Activated naive CD4-positive, alpha-beta T cell treated with anti-CD3 and anti-CD28 coated beads for 36 hours (primary cell): ENCODE measurements at regions of chr3 and their contacts with region 1.

Region 1: DNA sequence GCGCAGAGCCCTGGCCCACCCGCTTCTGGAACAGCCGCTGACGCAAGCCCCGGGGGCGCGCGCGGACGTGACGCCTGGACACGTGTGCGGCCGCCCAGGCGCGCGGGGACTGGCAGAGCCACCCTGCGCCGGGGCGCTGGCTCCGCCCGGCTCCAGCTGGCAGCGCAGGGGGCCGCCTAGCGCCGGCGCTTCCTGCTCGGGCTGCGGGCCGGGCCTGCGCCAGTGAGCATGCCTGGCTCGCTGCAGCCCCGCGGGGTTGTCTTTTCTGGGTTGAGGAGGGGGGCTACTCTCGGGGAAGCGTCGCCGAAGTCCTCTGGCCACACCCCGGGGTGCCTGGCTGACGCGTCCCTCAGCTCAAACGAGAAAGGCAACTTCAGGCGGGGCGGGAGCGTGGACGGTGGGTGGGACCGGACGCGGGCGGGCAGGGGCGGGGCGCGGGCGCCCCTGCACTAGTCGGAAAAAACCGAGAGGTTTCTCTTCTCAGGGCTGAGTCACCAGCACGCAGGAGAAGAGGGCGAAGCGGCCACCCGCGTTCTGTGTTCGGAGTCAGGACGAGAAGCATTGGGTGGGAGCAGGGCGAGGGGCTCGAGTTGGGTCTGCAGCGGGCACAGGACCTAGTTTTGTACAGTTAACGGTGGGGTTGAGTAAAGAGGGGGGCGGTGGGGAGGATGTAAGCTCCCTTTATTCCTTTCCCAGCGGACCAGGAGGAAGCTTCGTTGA is at the start of gene SIAH2:
- DNase-seq: peak; percentile 94
- H3K4me3 Mint-ChIP-seq: peak within 1 kb of the TSS; percentile 99
- H3K27ac Mint-ChIP-seq: peak within 1 kb of the TSS; percentile 100
- H3K4me1 Mint-ChIP-seq: peaks cover 46% of the 10 kb centered on the region
- H3K27me3 Mint-ChIP-seq: no peaks in the 10 kb centered on the region
- total RNA-seq, gene SIAH2: 67.1 to 68.8 TPM

Region 2: GRCh38 chr3:150546226-150547044 is 216.8 kb before region 1 on chr3 and contains the starts of genes EIF2A and SERP1:
- CTCF ChIA-PET with region 1: interaction called, 3 read pairs
- intact Hi-C with region 1: loop called (anchors 1 kb)
- DNase-seq: peak; percentile 99
- H3K4me3 Mint-ChIP-seq: peak within 1 kb of the TSS; percentile 97
- H3K27ac Mint-ChIP-seq: peak within 1 kb of the TSS; percentile 95
- H3K4me1 Mint-ChIP-seq: peaks cover 69% of the 10 kb centered on the region
- H3K27me3 Mint-ChIP-seq: no peaks in the 10 kb centered on the region
- total RNA-seq, gene EIF2A: 133 to 135 TPM
- total RNA-seq, gene SERP1: 95.9 to 105 TPM

Region 3: DNA sequence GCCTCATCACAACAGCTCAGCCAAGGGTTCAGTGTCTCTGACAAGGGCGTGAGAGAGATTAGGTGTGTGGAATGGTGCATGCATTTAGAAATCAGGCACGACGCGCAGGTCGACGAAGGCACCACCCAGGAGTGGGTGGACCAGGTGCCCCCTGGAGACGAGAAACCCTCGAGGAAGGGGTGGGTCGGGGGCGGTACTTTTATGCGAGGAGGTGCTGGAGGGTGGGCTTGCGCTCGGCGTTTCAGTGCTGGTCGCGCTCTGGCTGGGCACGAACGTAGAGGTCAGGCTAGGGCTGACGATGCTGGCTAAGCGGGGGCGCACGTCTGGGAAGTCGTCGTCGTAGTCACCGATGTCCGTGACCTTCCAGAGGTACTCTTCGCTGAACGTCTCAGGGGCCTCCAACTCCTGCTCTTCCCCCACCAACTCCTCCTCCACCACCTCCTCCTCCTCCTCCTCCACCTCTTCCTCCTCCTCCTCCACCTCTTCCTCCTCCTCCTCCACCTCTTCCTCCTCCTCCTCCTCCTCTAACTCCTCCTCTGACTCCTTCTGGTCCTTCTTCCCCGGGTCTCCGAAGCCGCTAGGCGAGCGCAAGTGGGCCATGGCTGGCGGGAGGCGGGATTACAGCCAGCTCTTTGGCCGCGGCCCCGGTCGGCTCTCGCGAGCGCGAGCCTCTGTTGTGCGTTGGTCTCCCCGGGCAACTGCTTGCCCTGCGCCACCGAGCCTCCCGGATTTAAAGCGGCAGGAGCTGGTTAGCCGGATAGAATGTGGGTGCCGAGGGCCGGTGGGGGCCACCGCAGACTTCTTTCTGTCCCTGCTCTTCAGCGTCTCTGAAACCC is 59.8 kb before region 1 on chr3 and contains the start of gene ERICH6:
- CTCF ChIA-PET with region 1: interaction called, 3 read pairs
- intact Hi-C with region 1: loop called (anchors 1 kb)
- DNase-seq: peak; percentile 88
- H3K4me3 Mint-ChIP-seq: peak within 1 kb of the TSS; percentile 96
- H3K27ac Mint-ChIP-seq: no peak within 1 kb of the TSS
- H3K4me1 Mint-ChIP-seq: peaks cover 25% of the 10 kb centered on the region
- H3K27me3 Mint-ChIP-seq: no peaks in the 10 kb centered on the region
- total RNA-seq, gene ERICH6: not detected

Region 4: GRCh38 chr3:150751753-150752263 is 11.5 kb before region 1 on chr3:
- CTCF ChIA-PET with region 1: interaction called, 4 read pairs
- intact Hi-C with region 1: loop called (anchors 1 kb)
- DNase-seq: no peak
- H3K4me3 Mint-ChIP-seq: no peak overlapping the region
- H3K27ac Mint-ChIP-seq: peak overlapping the region; percentile 56
- H3K4me1 Mint-ChIP-seq: peaks cover 84% of the 10 kb centered on the region
- H3K27me3 Mint-ChIP-seq: no peaks in the 10 kb centered on the region

Region 5: GRCh38 chr3:150870396-150870795 is 107.1 kb after region 1 on chr3:
- CTCF ChIA-PET with region 1: interaction called, 3 read pairs
- intact Hi-C with region 1: loop called (anchors 1 kb)
- DNase-seq: no peak
- H3K4me3 Mint-ChIP-seq: no peak overlapping the region
- H3K27ac Mint-ChIP-seq: no peak overlapping the region
- H3K4me1 Mint-ChIP-seq: no peaks in the 10 kb centered on the region
- H3K27me3 Mint-ChIP-seq: peaks cover 6% of the 10 kb centered on the region

Region 6: GRCh38 chr3:151276687-151277042 is 513.4 kb after region 1 on chr3:
- CTCF ChIA-PET with region 1: no interaction called
- intact Hi-C with region 1: loop called (anchors 10 kb)
- DNase-seq: peak; percentile 77
- H3K4me3 Mint-ChIP-seq: peak overlapping the region; percentile 55
- H3K27ac Mint-ChIP-seq: peak overlapping the region; percentile 85
- H3K4me1 Mint-ChIP-seq: peaks cover 39% of the 10 kb centered on the region
- H3K27me3 Mint-ChIP-seq: no peaks in the 10 kb centered on the region

Region 7: GRCh38 chr3:152268555-152269425 is 1505.5 kb after region 1 on chr3 and contains the start of gene MBNL1:
- CTCF ChIA-PET with region 1: no interaction called
- intact Hi-C with region 1: loop called (anchors 5 kb)
- DNase-seq: peak; percentile 91
- H3K4me3 Mint-ChIP-seq: peak within 1 kb of the TSS; percentile 81
- H3K27ac Mint-ChIP-seq: peak within 1 kb of the TSS; percentile 91
- H3K4me1 Mint-ChIP-seq: peaks cover 46% of the 10 kb centered on the region
- H3K27me3 Mint-ChIP-seq: no peaks in the 10 kb centered on the region
- total RNA-seq, gene MBNL1: 387 to 391 TPM